CD14-positive monocyte (primary cell): ENCODE measurements at regions of chr18 and their contacts with region 1.

Region 1: GRCh38 chr18:64589000-64589399 is 440.1 kb upstream of the LINC00305 start:
- DNase-seq: no peak
- H3K4me3 ChIP-seq: no peak overlapping the region
- H3K4me3 Mint-ChIP-seq: no peak overlapping the region
- H3K27ac ChIP-seq: no peak overlapping the region
- H3K27ac Mint-ChIP-seq: no peak overlapping the region
- H3K4me1 ChIP-seq: no peaks in the 10 kb centered on the region
- H3K4me1 Mint-ChIP-seq: no peaks in the 10 kb centered on the region
- H3K27me3 ChIP-seq: no peaks in the 10 kb centered on the region
- H3K27me3 Mint-ChIP-seq: no peaks in the 10 kb centered on the region
- CTCF ChIP-seq: no peak

Region 2: DNA sequence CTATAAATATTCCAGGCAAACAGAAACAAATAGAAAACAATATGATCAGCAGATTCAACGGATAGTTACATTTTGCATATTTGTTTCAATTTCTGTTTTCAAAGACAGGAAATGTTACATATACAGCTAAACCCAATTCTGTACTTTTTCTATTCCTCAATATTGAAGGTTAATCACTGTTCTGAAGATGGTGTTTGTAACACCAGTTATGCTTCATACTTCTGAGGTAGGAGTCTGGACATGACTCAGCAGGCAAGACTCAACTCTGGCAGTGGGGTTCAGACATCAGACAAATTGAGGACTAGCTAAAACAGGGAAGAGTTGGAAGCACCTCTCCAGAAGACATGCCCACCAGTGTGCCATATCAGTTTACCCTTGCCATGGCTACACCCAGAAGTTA is 985.2 kb before region 1 on chr18:
- intact Hi-C with region 1: no loop called
- DNase-seq: peak in 1 of 3 donors; percentile 59
- H3K4me3 ChIP-seq: peak overlapping the region in 1 of 3 experiments; percentile 20
- H3K4me3 Mint-ChIP-seq: no peak overlapping the region
- H3K27ac ChIP-seq: no peak overlapping the region
- H3K27ac Mint-ChIP-seq: no peak overlapping the region
- H3K4me1 ChIP-seq: peaks cover 8 to 19% of the 10 kb centered on the region in 2 donors
- H3K4me1 Mint-ChIP-seq: peaks cover 20% of the 10 kb centered on the region
- H3K27me3 ChIP-seq: no peaks in the 10 kb centered on the region
- H3K27me3 Mint-ChIP-seq: peaks cover 0 to 6% (median 1%) of the 10 kb centered on the region in 3 donors
- CTCF ChIP-seq: no peak

Region 3: DNA sequence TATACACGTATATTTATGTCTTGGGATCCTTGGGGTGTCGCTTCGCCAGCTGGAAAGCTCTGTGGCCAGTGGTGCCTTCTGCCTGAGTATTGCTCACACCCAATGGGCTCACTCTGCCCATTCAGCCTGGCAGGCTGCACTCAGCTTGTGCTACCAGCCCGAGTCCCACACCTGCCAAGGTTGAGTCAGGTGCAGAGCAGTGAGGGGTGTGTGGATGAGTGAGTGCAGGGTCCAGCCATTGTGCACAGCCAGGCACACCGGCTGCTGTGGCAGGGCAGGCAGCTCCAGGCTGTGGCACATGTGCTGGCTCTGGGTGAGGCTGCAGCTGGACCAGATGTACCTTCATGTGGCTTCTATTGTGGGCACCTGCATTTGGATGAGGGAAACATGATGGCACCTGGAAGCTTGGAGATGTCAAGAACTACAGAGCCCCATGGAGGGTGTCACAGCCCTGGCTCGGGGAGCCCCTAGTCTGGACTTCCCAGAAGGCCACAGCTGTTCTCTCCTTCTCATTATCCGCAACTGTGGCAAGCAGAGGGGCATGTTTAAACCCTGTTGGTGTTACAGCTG is 56.8 kb after region 1 on chr18:
- intact Hi-C with region 1: loop called in 1 of 2 experiments (anchors 10 kb)
- DNase-seq: no peak
- H3K4me3 ChIP-seq: no peak overlapping the region
- H3K4me3 Mint-ChIP-seq: no peak overlapping the region
- H3K27ac ChIP-seq: no peak overlapping the region
- H3K27ac Mint-ChIP-seq: no peak overlapping the region
- H3K4me1 ChIP-seq: no peaks in the 10 kb centered on the region
- H3K4me1 Mint-ChIP-seq: no peaks in the 10 kb centered on the region
- H3K27me3 ChIP-seq: no peaks in the 10 kb centered on the region
- H3K27me3 Mint-ChIP-seq: no peaks in the 10 kb centered on the region
- CTCF ChIP-seq: no peak

Region 4: DNA sequence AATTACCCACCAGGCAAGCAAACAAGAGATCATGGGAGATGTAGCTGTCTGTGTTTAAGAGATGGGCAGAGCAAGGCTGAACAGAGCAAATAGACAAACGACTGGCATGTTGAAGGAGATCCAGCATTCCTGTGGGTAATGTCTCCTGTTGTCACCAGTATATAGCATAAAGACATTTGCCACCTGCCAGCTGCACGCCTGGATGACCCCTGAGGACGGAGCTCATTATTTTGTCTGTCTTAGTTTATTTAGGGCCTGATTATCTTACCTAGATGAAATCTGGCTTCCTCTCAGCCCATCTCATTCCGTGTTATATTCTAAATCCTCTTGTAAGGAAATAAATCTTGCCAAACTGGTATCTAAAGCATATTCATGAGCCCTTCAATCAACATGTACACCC is 70.2 kb after region 1 on chr18:
- intact Hi-C with region 1: no loop called
- DNase-seq: no peak
- H3K4me3 ChIP-seq: no peak overlapping the region
- H3K4me3 Mint-ChIP-seq: no peak overlapping the region
- H3K27ac ChIP-seq: no peak overlapping the region
- H3K27ac Mint-ChIP-seq: peak overlapping the region in 1 of 7 donors; percentile 8
- H3K4me1 ChIP-seq: no peaks in the 10 kb centered on the region
- H3K4me1 Mint-ChIP-seq: no peaks in the 10 kb centered on the region
- H3K27me3 ChIP-seq: no peaks in the 10 kb centered on the region
- H3K27me3 Mint-ChIP-seq: peaks cover 0 to 3% (median 0%) of the 10 kb centered on the region in 3 donors
- CTCF ChIP-seq: no peak

Region 5: GRCh38 chr18:64713284-64713683 is 124.3 kb after region 1 on chr18:
- intact Hi-C with region 1: no loop called
- DNase-seq: peak; percentile 25 to 57 (median 42)
- H3K4me3 ChIP-seq: peak overlapping the region in 1 of 3 experiments; percentile 33
- H3K4me3 Mint-ChIP-seq: peak overlapping the region in 1 of 2 donors; percentile 67
- H3K27ac ChIP-seq: peak overlapping the region in 1 of 2 donors; percentile 43
- H3K27ac Mint-ChIP-seq: peak overlapping the region; percentile 30 to 87 (median 76)
- H3K4me1 ChIP-seq: peaks cover 14 to 23% of the 10 kb centered on the region in 2 donors
- H3K4me1 Mint-ChIP-seq: peaks cover 22% of the 10 kb centered on the region
- H3K27me3 ChIP-seq: no peaks in the 10 kb centered on the region
- H3K27me3 Mint-ChIP-seq: no peaks in the 10 kb centered on the region
- CTCF ChIP-seq: no peak

Region 6: GRCh38 chr18:64777561-64777960 is 188.6 kb after region 1 on chr18:
- intact Hi-C with region 1: no loop called
- DNase-seq: no peak
- H3K4me3 ChIP-seq: no peak overlapping the region
- H3K4me3 Mint-ChIP-seq: no peak overlapping the region
- H3K27ac ChIP-seq: no peak overlapping the region
- H3K27ac Mint-ChIP-seq: no peak overlapping the region
- H3K4me1 ChIP-seq: no peaks in the 10 kb centered on the region
- H3K4me1 Mint-ChIP-seq: no peaks in the 10 kb centered on the region
- H3K27me3 ChIP-seq: no peaks in the 10 kb centered on the region
- H3K27me3 Mint-ChIP-seq: peaks cover 0 to 3% (median 2%) of the 10 kb centered on the region in 3 donors
- CTCF ChIP-seq: no peak